ENCODE measurements at regions of chr2 and their contacts with region 1.

Region 1: DNA sequence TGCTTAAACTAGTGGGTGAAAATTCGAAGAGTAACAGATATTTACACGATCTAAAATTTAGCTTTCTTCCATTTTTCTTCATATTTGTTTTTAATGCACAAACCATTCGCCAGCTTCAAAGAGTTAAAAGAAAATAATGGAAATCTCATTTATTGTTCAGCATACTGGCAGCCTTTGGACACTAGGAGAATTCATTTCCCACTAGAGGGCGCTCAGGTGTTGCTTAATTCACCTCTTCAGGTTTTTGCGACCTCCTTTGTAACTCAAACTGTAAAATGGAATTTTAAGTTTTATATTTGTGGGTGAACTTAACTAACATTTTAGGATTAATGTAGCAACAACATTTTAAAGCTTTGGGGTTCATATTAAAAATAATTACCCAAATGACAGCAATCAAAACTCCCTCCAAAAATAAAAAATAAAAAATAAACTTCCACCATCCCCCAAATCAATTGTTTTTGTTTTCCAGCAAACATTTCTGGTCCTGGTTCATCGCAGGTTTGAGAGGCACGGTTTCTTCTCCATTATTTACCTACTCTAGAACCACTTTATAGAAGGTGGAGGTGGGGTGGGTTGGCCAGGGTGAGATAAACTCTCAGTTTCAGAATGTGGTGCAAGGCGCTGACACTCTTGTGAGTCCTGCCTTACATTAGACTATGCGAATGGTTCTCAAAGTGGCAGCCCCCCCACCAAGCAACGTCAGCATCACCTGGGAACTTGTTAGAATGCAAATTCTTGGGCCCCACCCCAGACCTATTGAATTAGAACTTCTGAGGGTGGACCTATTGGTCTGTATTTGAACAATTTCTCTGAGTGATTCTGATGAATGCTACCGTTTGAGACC is 24.7 kb upstream of the PNPT1 start:
- DNase-seq: peak; percentile 73
- H3K4me3 ChIP-seq: no peak overlapping the region
- H3K27ac ChIP-seq: no peak overlapping the region
- H3K4me1 ChIP-seq: no peaks in the 10 kb centered on the region
- H3K27me3 ChIP-seq: peaks cover 9% of the 10 kb centered on the region
- CTCF ChIP-seq: peak; percentile 88

Region 2: DNA sequence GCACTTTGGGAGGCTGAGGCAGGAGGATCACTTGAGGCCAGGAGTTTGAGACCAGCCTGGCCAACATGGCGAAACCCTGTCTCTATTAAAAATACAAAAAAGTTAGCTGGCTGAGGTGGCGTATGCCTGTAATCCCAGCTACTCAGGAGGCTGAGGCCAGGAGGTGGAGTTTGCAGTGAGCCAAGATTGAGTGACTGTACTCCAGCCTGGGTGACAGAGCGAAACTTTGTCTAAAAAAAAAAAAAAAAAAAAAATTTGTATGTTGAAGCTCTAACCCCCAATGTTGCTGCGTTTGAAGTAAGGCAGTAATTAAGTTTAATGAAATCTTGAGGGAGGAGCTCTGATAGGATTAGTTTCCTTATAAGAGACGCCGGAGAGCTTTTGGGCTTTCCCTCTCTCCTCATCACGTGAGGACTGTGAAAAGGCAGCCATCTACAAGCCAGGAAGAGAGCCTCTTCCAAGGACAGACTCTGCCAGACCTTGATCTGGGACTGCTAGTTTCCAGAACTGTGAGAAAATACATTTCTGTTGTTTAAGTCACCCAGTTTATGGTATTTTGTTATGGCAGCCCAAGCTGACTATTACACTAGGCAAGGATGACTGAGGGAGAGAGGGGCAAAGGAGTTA is 13.2 kb before region 1 on chr2:
- CTCF ChIA-PET with region 1: interaction called, 11 read pairs
- POLR2A ChIA-PET with region 1: no interaction called
- intact Hi-C with region 1: no loop called
- DNase-seq: no peak
- H3K4me3 ChIP-seq: no peak overlapping the region
- H3K27ac ChIP-seq: no peak overlapping the region
- H3K4me1 ChIP-seq: no peaks in the 10 kb centered on the region
- H3K27me3 ChIP-seq: no peaks in the 10 kb centered on the region
- CTCF ChIP-seq: no peak

Region 3: GRCh38 chr2:55961318-55961911 is 243.0 kb after region 1 on chr2:
- CTCF ChIA-PET with region 1: no interaction called
- POLR2A ChIA-PET with region 1: no interaction called
- intact Hi-C with region 1: loop called (anchors 2 kb)
- DNase-seq: peak; percentile 54
- H3K4me3 ChIP-seq: no peak overlapping the region
- H3K27ac ChIP-seq: no peak overlapping the region
- H3K4me1 ChIP-seq: no peaks in the 10 kb centered on the region
- H3K27me3 ChIP-seq: peaks cover 16% of the 10 kb centered on the region
- CTCF ChIP-seq: peak; percentile 74

Region 4: GRCh38 chr2:56009758-56010458 is 291.5 kb after region 1 on chr2:
- CTCF ChIA-PET with region 1: interaction called, 3 read pairs
- POLR2A ChIA-PET with region 1: no interaction called
- intact Hi-C with region 1: loop called (anchors 2 kb)
- DNase-seq: peak; percentile 51
- H3K4me3 ChIP-seq: no peak overlapping the region
- H3K27ac ChIP-seq: no peak overlapping the region
- H3K4me1 ChIP-seq: peaks cover 5% of the 10 kb centered on the region
- H3K27me3 ChIP-seq: peaks cover 14% of the 10 kb centered on the region
- CTCF ChIP-seq: peak; percentile 71

Region 5: DNA sequence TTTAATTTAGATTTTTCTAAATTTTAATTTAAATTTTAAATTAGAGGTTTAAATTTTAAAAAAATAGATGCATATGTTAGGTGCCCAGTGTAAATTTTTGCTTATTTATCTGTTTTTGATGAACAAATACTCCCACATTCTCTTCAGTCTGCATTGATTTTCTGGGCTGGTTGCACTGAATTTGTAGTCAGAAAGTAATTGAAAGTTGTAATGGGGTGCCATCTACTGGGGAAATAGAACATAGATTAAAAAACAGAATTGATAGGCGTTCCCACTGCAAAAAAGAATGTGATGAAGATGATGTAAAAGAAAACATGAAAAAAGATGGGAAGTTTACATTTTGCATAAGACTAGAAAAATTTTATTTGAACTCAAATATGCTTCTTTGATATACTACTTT is 413.8 kb after region 1 on chr2:
- CTCF ChIA-PET with region 1: interaction called, 4 read pairs
- POLR2A ChIA-PET with region 1: no interaction called
- intact Hi-C with region 1: loop called (anchors 2 kb)
- DNase-seq: peak; percentile 63
- H3K4me3 ChIP-seq: no peak overlapping the region
- H3K27ac ChIP-seq: no peak overlapping the region
- H3K4me1 ChIP-seq: peaks cover 6% of the 10 kb centered on the region
- H3K27me3 ChIP-seq: no peaks in the 10 kb centered on the region
- CTCF ChIP-seq: peak; percentile 63

Region 6: DNA sequence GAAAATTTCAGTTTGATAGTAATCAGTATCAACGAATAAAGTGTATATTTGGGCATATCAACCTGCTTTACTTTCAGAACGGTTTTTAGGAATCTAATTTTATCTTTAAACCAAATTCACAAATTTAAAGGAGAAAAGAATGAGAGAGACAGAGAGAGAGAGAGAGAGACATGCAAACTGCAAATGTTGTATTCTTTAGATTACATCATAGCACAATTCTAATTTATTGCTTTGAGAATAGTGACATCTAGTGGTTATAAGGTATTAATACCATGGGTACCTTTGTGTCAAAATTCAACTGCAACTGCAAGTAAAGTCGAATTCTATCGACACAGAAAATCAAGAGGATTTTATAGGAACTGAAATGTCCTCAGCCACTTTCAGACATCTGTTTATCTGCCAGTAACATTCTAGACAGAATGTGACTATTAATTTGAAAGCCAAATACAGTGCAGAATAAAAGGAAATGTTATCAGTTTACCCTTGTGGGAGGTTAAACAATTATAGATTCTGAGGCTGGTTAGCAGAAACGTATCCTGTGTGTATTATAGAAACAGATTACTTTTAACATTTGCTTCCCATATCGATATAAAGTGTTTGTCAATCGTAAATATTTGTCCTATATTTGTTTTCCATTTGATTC is 1798.4 kb after region 1 on chr2:
- CTCF ChIA-PET with region 1: no interaction called
- POLR2A ChIA-PET with region 1: no interaction called
- intact Hi-C with region 1: loop called (anchors 10 kb)
- DNase-seq: peak; percentile 74
- H3K4me3 ChIP-seq: no peak overlapping the region
- H3K27ac ChIP-seq: no peak overlapping the region
- H3K4me1 ChIP-seq: peaks cover 8% of the 10 kb centered on the region
- H3K27me3 ChIP-seq: no peaks in the 10 kb centered on the region
- CTCF ChIP-seq: peak; percentile 63

Measured in A673 (cell line).